ENCODE measurements at regions of chrX and their contacts with region 1.

Region 1: GRCh38 chrX:53433651-53434639 is at the start of gene HSD17B10:
- DNase-seq: peak; percentile 86
- CTCF ChIP-seq: no peak

Region 2: DNA sequence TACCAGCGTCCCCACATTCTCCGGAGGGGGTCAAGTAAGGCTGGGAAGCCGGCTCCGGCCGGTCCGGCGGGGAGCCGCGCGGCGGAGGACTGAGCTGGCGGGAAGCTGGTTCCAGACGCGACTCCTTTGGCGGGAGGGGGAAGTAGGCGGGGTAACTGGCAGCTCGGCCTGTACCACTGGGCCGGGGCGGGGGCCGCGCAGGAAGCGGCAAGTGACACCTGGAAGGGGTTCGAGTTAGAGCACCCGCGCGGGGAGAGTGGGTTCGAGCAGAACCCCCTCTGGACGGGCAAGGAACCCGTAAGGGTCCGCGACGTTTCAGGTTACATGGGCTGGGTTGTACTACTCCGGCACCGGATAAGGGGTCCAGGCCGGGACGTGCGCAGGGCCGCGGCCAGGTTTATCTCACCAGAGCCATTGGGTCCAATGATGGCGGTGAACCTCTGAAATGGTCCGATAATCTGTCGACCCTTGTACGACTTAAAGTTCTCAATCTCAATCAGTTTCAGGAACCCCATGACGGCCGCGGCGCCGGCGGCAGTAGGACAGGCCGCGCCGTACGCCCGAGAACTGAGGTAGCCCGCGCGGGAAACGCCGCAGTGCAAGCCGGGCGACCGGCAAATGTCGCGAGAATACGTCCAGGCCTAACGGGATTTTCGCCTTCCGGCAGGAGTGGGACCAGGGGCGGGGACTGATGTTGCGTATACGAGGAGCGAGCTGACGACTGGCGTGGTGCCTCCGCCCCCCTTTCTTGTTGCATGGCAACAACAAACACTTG is 11.7 kb before region 1 on chrX and contains the start of gene SMC1A:
- CTCF ChIA-PET with region 1: interaction called, 24 read pairs
- POLR2A ChIA-PET with region 1: interaction called, 4 read pairs
- DNase-seq: peak; percentile 97
- CTCF ChIP-seq: no peak

Region 3: DNA sequence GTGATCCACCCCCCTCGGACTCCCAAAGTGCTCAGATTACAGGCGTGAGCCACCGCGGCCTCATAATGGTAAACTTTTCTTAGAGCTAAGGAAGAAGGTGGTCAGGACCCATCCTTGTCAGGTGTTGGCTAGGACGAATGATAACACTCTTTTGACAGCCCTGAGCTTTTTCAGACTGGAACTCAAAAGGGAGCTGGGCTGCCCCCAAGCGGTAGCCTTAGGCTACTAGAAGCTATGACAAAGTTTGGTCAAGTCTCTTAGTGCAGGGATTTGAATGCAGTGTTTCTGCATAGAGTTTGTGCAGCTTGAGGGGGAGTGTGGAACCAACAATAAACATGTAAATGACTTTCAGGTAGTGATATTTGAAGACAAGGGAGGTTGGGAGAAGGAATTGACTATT is 12.0 kb after region 1 on chrX:
- CTCF ChIA-PET with region 1: interaction called, 12 read pairs
- POLR2A ChIA-PET with region 1: interaction called, 3 read pairs
- DNase-seq: peak; percentile 44
- CTCF ChIP-seq: peak; percentile 44

Region 4: DNA sequence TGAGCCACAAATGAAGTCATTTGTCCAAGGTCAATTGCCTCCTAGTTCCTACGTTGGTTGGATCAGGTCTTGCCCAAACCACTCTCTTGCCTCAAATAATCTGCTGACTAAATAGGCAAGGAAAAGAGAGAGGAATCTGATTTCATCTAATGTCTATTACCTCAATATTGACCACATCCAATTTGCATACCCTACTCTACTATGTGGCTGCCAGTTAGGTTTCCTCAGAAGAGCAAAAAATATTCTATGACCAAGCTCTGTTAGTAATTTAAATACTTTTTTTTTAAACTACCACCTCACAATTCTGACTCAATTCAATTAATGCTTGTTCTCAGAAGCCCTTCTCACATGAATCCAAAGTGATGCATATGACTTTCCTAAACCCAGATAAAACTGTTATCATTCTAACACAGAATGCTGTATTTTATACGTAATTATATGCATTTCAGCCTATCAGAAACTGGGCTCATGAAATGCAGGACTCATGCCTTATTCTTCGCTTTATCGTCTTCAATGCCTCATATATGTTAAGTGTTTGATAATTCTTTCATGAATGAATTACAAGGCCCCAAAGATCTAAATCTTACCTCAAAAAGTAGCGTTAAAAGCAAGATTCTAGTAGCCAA is 154.0 kb after region 1 on chrX:
- CTCF ChIA-PET with region 1: no interaction called
- POLR2A ChIA-PET with region 1: no interaction called
- DNase-seq: no peak
- CTCF ChIP-seq: no peak

Measured in GM10248 (cell line).